ENCODE measurements at regions of chr2 and their contacts with region 1.

Region 1: DNA sequence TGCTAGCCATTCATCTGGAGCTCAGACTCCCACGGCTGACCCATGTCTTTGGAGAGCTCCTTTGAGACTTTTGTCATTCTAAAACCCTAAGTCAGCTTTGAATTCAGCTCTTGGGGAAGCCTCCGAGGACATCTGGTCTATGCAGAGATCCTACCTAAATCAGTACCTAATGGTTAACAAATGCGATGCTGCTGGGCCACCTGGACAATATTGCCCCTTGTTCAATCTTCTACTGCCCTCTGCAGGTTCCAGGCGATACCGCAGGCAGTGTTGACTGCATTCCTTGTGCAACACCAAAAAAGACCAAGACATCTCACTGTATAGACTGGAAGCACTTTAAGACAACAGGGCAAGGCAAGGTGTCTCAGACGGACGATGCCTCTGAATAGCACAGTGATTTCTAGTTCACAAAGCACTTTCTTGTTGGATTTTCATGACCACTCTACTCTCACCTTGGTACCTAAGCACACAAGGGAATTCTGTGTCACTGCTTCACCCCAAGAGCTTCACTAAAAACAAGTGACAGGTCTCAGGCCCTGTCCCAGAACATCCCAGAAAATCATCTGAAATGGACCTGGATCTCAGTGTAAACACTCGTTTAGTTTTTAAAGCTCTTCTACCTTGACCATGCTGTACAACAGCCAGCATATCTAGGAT is 80.9 kb downstream of the XDH start:
- DNase-seq: peak; percentile 82
- H3K4me3 ChIP-seq: no peak overlapping the region
- H3K27ac ChIP-seq: no peak overlapping the region
- H3K4me1 ChIP-seq: no peaks in the 10 kb centered on the region
- H3K27me3 ChIP-seq: no peaks in the 10 kb centered on the region
- CTCF ChIP-seq: peak; percentile 90

Region 2: DNA sequence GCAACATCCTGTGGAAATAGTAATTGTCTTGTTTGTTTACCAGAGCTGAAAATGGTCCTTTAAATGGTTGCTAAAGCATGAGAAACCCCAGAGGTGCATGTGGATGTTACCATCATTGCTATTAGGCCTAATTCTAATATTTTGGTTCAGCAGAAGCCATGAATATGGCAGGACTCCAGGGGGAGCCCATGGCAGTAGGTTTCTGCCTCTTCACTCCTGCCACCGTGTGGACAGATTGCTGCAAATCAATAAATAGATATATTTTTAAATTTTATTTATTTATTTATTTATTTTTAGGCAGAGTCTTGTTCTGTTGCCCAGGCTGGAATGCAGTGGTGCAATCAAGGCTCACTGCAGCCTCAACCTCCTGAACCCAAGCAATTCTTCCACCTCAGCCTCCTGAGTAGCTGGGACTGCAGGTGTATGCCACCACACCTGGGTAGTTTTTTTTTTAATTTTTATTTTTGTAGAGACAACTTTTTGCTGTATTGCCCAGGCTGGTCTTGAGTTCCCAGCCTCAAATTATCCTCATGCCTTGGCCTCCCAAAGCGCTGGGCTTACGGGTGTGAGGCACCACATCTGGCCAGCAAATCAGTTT is 471.5 kb before region 1 on chr2:
- intact Hi-C with region 1: loop called (anchors 5 kb)
- DNase-seq: peak; percentile 58
- H3K4me3 ChIP-seq: no peak overlapping the region
- H3K27ac ChIP-seq: no peak overlapping the region
- H3K4me1 ChIP-seq: no peaks in the 10 kb centered on the region
- H3K27me3 ChIP-seq: no peaks in the 10 kb centered on the region
- CTCF ChIP-seq: peak; percentile 75

Region 3: GRCh38 chr2:31420936-31421335 is 87.3 kb after region 1 on chr2:
- intact Hi-C with region 1: no loop called
- DNase-seq: peak; percentile 31
- H3K4me3 ChIP-seq: no peak overlapping the region
- H3K27ac ChIP-seq: peak overlapping the region; percentile 9
- H3K4me1 ChIP-seq: no peaks in the 10 kb centered on the region
- H3K27me3 ChIP-seq: no peaks in the 10 kb centered on the region
- CTCF ChIP-seq: no peak

Region 4: GRCh38 chr2:31457651-31458050 is 124.0 kb after region 1 on chr2:
- intact Hi-C with region 1: no loop called
- DNase-seq: no peak
- H3K4me3 ChIP-seq: no peak overlapping the region
- H3K27ac ChIP-seq: no peak overlapping the region
- H3K4me1 ChIP-seq: no peaks in the 10 kb centered on the region
- H3K27me3 ChIP-seq: no peaks in the 10 kb centered on the region
- CTCF ChIP-seq: no peak